HEK293T (cell line): ENCODE measurements at regions of chr11 and their contacts with region 1.

Region 1: DNA sequence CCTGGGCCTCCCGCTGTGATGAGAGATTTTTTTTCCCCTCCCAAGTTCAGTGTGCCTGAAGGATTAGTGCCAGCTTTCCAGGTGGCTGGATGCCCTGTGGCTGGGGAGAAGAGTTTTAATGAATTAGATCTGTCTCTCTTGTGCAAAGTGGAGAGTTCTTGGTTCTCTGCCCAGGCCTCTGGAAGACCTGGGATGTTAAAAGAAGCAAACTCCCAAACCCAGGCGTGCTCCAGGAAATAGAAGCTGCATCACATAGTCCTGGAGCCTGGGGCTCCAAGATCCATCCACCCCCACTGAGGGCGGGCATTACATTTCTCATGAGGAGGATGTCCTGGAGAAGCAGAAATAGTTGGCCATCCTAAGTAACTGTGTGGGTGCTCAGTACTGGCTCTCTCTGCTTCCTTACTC is 30.6 kb downstream of the SDHAF2 start:
- DNase-seq: no peak

Region 2: GRCh38 chr11:61446211-61446651 is 14.2 kb before region 1 on chr11:
- CTCF ChIA-PET with region 1: interaction called, 15 read pairs
- POLR2A ChIA-PET with region 1: interaction called, 3 read pairs
- DNase-seq: peak; percentile 85